ENCODE measurements at regions of chr6 and their contacts with region 1.

Region 1: GRCh38 chr6:167661552-167662044 is 165.1 kb upstream of the AFDN start:
- DNase-seq: no peak
- H3K4me3 ChIP-seq: no peak overlapping the region
- H3K27ac ChIP-seq: no peak overlapping the region
- H3K4me1 ChIP-seq: peaks cover 0 to 2% (median 0%) of the 10 kb centered on the region in 4 experiments; a peak in 1 of 7 replicates
- H3K27me3 ChIP-seq: no peaks in the 10 kb centered on the region
- CTCF ChIP-seq: no peak
- EP300 ChIP-seq: no peak
- POLR2A ChIP-seq: no peak
- RAD21 ChIP-seq: no peak

Region 2: DNA sequence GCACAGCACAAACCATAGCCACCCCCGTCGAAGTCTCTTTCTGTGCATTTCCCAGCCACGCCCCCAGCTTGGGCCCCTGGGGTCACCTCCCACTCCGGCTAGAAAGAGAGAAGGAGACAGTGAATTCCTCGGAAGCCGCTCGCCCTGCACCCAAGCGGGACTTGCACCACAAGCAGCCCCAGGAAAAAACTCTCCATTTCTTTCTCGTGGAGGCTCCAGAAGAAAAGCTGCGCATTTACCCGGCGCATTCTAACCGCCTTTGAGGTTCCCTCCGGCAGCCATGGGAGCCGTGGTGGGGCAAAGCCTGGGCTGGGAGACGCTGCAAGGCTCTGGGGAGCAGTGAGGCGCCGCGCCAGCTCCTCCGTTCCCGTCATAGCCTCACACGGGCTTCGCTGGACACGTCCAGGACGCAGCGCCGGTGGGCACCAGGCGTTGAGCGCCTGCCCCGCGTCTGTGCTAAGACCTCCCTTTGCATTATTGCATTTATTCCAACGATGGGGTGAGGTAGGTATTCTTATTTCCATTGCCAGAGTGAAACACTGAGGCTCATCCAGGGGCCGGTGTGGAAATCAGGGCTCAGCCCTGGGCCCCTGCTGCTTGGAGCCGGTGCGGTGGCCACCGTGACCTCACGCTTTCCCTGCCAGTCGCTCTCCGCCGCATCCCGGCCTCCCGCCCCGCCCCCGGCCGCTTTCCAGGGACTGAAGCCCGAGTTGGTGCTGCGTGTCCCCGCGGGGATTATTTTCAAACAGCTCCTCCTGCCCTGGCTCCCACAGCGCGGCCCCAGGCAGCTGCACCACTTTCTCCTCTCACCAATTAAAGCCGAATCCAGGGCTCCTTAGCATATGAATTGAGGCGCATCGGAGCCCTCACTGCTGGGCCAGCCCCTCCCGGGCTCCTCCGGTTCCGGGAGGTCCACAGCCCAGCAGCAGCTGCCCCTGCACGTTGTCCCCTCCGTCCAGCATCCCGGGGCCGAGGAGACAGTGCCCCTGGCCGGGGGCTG is 16.8 kb after region 1 on chr6:
- CTCF ChIA-PET with region 1: interaction called, 10 read pairs
- POLR2A ChIA-PET with region 1: no interaction called
- DNase-seq: peak in 1 of 2 experiments; percentile 84
- H3K4me3 ChIP-seq: peak overlapping the region; percentile 50 to 61 (median 58)
- H3K27ac ChIP-seq: no peak overlapping the region
- H3K4me1 ChIP-seq: peaks cover 0 to 20% (median 10%) of the 10 kb centered on the region in 4 experiments; a peak in 5 of 7 replicates
- H3K27me3 ChIP-seq: peaks cover 0 to 17% (median 8%) of the 10 kb centered on the region in 4 experiments; a peak in 4 of 7 replicates
- CTCF ChIP-seq: 0 out of 4 replicates have a peak, but pooled peaks of 1 of the 3 experiments have one; percentile 1
- EP300 ChIP-seq: peak in 1 of 2 experiments; percentile 42; a peak in 1 of 3 replicates
- POLR2A ChIP-seq: peak in 1 of 2 experiments; percentile 24; a peak in 1 of 3 replicates
- RAD21 ChIP-seq: 0 out of 4 replicates have a peak, but pooled peaks of 1 of the 2 experiments have one; percentile 6

Region 3: DNA sequence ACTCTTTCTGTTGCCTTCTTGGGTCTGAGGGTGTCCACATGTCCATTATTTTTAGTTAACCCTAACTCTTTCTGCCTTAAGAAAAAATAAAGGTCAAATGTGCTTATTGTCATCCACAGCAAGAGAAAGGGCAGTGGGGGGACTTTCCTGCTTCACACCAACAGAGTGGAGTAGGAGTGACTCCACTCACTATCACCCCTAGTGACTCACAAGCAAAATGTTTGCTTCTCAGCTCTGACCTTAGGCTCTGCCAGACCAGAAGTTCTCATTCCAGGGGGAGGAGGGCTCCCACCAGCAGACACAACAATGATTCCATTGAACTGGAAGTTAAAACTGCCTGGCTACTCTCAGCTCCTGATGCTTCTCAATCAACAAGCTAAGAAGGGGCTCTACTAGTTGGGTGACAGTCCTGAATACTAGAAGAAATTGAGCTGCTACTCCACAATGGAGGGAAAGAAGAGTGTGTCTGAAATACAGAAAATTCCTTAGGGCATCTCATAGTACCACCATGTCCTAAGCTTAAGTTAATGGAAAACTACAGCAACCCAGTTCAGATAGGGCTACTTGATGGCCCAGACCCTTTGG is 81.2 kb after region 1 on chr6:
- CTCF ChIA-PET with region 1: no interaction called
- POLR2A ChIA-PET with region 1: no interaction called
- DNase-seq: no peak
- H3K4me3 ChIP-seq: no peak overlapping the region
- H3K27ac ChIP-seq: no peak overlapping the region
- H3K4me1 ChIP-seq: no peaks in the 10 kb centered on the region
- H3K27me3 ChIP-seq: no peaks in the 10 kb centered on the region
- CTCF ChIP-seq: peak in 1 of 3 experiments; percentile 39; a peak in 1 of 4 replicates
- EP300 ChIP-seq: no peak
- POLR2A ChIP-seq: no peak
- RAD21 ChIP-seq: peak; percentile 30 to 39